A549 (cell line): ENCODE measurements at regions of chrX and their contacts with region 1.

Region 1: DNA sequence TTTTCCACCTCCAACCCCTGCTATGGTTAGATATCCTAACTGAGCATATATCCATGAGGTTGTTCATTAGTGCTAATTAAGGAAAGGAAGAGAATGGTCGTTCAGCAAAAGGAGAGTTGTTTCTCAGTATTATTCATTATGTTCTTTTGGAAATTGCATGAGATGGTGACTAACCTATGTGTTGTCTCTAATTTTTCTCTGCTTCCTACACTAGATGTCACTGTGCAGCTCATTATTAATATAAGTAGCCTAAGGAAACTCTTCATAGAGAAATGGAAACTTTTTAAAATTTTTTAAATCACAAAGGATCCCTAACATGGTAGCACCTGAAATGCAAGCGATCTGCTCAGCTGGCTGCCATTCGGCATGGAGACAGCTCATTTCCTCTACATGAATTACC is 67.7 kb upstream of the FAM9A start:
- DNase-seq: no peak
- ATAC-seq: peak; percentile 55 to 75; a peak in 4 of 6 replicates
- H3K4me3 ChIP-seq: no peak overlapping the region
- H3K27ac ChIP-seq: peak overlapping the region; percentile 80 to 84
- H3K4me1 ChIP-seq: peaks cover 29% of the 10 kb centered on the region
- CTCF ChIP-seq: peak; percentile 51
- EP300 ChIP-seq: no peak
- POLR2A ChIP-seq: no peak
- RAD21 ChIP-seq: peak; percentile 44 to 46; a peak in 4 of 5 replicates

Region 2: DNA sequence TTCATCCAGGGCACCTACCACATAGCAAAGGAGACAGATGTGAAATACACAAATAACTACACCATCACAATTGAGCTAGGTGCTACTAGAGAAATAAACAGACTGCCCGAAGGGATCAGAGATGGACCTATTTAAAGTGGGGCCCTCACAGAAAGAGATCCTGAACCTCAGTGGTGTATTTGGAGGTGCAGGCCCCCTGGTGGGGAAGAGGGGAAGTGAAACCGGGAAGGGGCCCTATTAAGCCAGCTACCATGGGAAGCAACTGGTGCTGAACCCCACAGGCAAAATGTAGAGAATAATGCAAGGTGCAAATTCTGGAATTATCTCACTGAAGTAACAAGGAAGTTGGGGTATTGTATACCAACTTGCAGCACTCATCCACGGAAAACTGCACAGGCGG is 10.8 kb after region 1 on chrX:
- CTCF ChIA-PET with region 1: interaction called, 16 read pairs
- POLR2A ChIA-PET with region 1: no interaction called
- DNase-seq: peak; percentile 1 to 26
- ATAC-seq: peak in 1 of 2 experiments; percentile 70; a peak in 3 of 6 replicates
- H3K4me3 ChIP-seq: no peak overlapping the region
- H3K27ac ChIP-seq: no peak overlapping the region
- H3K4me1 ChIP-seq: no peaks in the 10 kb centered on the region
- CTCF ChIP-seq: peak; percentile 25
- EP300 ChIP-seq: no peak
- POLR2A ChIP-seq: no peak
- RAD21 ChIP-seq: peak; percentile 28 to 40; a peak in 4 of 5 replicates